ENCODE measurements at regions of chr4 and their contacts with region 1.

Region 1: GRCh38 chr4:138090150-138090917 is 151.8 kb downstream of the SLC7A11 start:
- DNase-seq: peak; percentile 75
- H3K4me3 ChIP-seq: peak overlapping the region; percentile 13 to 26 (median 13)
- H3K27ac ChIP-seq: no peak overlapping the region
- H3K4me1 ChIP-seq: peaks cover 5% of the 10 kb centered on the region
- H3K27me3 ChIP-seq: no peaks in the 10 kb centered on the region
- CTCF ChIP-seq: peak; percentile 67 to 71

Region 2: DNA sequence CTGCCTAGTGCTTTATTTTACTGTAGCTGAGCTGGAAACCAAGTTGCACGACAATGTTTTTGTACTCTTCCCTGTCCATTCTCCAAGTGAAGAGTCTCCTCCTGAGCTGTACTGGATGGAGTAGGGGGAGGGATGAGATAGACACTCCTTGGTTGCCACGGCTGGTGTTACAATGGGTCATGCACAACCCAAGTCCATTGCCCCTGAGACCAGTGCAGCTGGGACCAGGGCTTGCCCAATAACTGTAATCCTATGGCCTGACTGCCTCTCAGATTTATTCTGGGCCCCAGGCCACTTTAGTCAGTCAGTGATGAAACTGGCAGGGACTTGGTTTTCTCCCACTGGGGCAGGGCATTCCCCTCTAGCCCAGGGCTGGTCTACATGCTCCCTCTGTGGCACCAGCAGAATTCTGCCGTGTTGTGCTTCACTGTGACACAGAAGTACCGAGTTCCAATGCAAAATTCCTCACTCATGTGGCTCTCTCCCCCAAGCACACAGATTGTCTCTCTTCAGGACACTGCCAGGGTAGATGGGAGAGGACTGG is 354.7 kb before region 1 on chr4:
- CTCF ChIA-PET with region 1: no interaction called
- dilution Hi-C with region 1: no loop called
- in situ Hi-C with region 1: no loop called
- intact Hi-C with region 1: loop called (anchors 2 kb)
- DNase-seq: no peak
- H3K4me3 ChIP-seq: no peak overlapping the region
- H3K27ac ChIP-seq: no peak overlapping the region
- H3K4me1 ChIP-seq: no peaks in the 10 kb centered on the region
- H3K27me3 ChIP-seq: no peaks in the 10 kb centered on the region
- CTCF ChIP-seq: no peak

Region 3: GRCh38 chr4:137952116-137952515 is 138.2 kb before region 1 on chr4:
- CTCF ChIA-PET with region 1: no interaction called
- dilution Hi-C with region 1: no loop called
- in situ Hi-C with region 1: no loop called
- intact Hi-C with region 1: no loop called
- DNase-seq: no peak
- H3K4me3 ChIP-seq: no peak overlapping the region
- H3K27ac ChIP-seq: no peak overlapping the region
- H3K4me1 ChIP-seq: peaks cover 7% of the 10 kb centered on the region
- H3K27me3 ChIP-seq: no peaks in the 10 kb centered on the region
- CTCF ChIP-seq: no peak

Region 4: GRCh38 chr4:138021139-138021830 is 69.0 kb before region 1 on chr4:
- CTCF ChIA-PET with region 1: no interaction called
- dilution Hi-C with region 1: no loop called
- in situ Hi-C with region 1: no loop called
- intact Hi-C with region 1: no loop called
- DNase-seq: no peak
- H3K4me3 ChIP-seq: no peak overlapping the region
- H3K27ac ChIP-seq: no peak overlapping the region
- H3K4me1 ChIP-seq: no peaks in the 10 kb centered on the region
- H3K27me3 ChIP-seq: no peaks in the 10 kb centered on the region
- CTCF ChIP-seq: no peak

Region 5: DNA sequence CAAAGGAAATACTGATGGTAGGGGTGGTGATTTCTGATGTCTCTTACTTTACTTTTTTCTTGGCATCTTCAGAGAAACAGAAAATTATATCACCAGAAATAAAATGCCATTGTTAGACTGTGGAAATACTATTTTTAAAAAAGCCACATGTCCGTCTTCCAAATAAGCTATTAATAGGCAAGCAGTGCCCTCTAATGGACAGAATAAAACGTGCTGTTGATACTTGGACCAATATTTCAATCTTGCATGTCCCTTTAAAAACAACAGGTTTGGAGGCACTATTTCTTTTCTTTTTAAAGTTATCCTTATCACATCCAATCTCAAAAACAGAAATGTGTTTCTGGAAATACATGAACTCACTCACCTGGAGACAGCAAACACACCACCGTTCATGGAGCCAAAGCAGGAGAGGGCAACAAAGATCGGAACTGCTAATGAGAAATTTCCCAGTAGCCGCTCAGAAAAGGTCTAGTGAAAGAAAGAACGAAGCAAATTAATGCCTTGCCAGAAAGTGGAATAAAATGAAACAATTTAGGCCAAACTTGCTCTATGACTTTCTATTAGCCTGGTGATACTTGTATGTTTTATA is 92.6 kb after region 1 on chr4:
- CTCF ChIA-PET with region 1: interaction called, 4 read pairs
- dilution Hi-C with region 1: no loop called
- in situ Hi-C with region 1: no loop called
- intact Hi-C with region 1: loop called (anchors 2 kb)
- DNase-seq: peak; percentile 45
- H3K4me3 ChIP-seq: no peak overlapping the region
- H3K27ac ChIP-seq: no peak overlapping the region
- H3K4me1 ChIP-seq: peaks cover under 1% of the 10 kb centered on the region
- H3K27me3 ChIP-seq: no peaks in the 10 kb centered on the region
- CTCF ChIP-seq: peak; percentile 59 to 70

Region 6: GRCh38 chr4:138494931-138495330 is 404.6 kb after region 1 on chr4:
- CTCF ChIA-PET with region 1: interaction called, 3 read pairs
- dilution Hi-C with region 1: no loop called
- in situ Hi-C with region 1: no loop called
- intact Hi-C with region 1: loop called (anchors 10 kb)
- DNase-seq: peak; percentile 54
- H3K4me3 ChIP-seq: no peak overlapping the region
- H3K27ac ChIP-seq: no peak overlapping the region
- H3K4me1 ChIP-seq: no peaks in the 10 kb centered on the region
- H3K27me3 ChIP-seq: no peaks in the 10 kb centered on the region
- CTCF ChIP-seq: peak; percentile 20 to 40

Region 7: GRCh38 chr4:138522366-138522765 is 432.0 kb after region 1 on chr4:
- CTCF ChIA-PET with region 1: no interaction called
- dilution Hi-C with region 1: no loop called
- in situ Hi-C with region 1: no loop called
- intact Hi-C with region 1: loop called (anchors 1 kb)
- DNase-seq: peak; percentile 30
- H3K4me3 ChIP-seq: no peak overlapping the region
- H3K27ac ChIP-seq: no peak overlapping the region
- H3K4me1 ChIP-seq: no peaks in the 10 kb centered on the region
- H3K27me3 ChIP-seq: no peaks in the 10 kb centered on the region
- CTCF ChIP-seq: peak; percentile 44 to 73

Region 8: GRCh38 chr4:138680989-138681604 is 590.8 kb after region 1 on chr4:
- CTCF ChIA-PET with region 1: no interaction called
- dilution Hi-C with region 1: no loop called
- in situ Hi-C with region 1: no loop called
- intact Hi-C with region 1: loop called (anchors 5 kb)
- DNase-seq: peak; percentile 49
- H3K4me3 ChIP-seq: no peak overlapping the region
- H3K27ac ChIP-seq: no peak overlapping the region
- H3K4me1 ChIP-seq: no peaks in the 10 kb centered on the region
- H3K27me3 ChIP-seq: no peaks in the 10 kb centered on the region
- CTCF ChIP-seq: peak; percentile 81 to 83